ENCODE measurements at regions of chr10 and their contacts with region 1.

Region 1: DNA sequence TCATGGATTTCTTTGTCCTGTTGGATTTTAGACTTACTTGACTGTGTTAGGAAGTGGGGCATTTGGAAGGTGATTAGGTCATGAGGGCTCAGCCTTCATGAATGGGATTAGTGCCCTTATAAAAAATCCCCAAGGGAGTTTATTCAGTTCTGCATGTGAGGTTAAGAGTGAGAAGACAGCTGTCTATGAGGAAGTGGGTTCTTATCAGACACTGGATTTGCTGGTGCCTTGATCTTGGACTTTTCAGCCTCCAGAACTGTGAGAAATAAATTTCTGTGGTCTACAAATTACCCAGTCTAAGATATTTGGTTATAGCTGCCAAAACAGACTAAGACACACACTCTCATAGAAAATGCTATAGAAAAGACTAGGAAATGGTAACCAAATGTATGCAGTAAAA is 724.7 kb upstream of the FZD8 start:
- DNase-seq: no peak
- ATAC-seq: no peak
- H3K4me3 ChIP-seq: no peak overlapping the region
- H3K27ac ChIP-seq: no peak overlapping the region
- H3K4me1 ChIP-seq: 0 out of 2 replicates have a peak, but pooled peaks cover 3% of the 10 kb centered on the region
- H3K27me3 ChIP-seq: no peaks in the 10 kb centered on the region
- CTCF ChIP-seq: no peak

Region 2: DNA sequence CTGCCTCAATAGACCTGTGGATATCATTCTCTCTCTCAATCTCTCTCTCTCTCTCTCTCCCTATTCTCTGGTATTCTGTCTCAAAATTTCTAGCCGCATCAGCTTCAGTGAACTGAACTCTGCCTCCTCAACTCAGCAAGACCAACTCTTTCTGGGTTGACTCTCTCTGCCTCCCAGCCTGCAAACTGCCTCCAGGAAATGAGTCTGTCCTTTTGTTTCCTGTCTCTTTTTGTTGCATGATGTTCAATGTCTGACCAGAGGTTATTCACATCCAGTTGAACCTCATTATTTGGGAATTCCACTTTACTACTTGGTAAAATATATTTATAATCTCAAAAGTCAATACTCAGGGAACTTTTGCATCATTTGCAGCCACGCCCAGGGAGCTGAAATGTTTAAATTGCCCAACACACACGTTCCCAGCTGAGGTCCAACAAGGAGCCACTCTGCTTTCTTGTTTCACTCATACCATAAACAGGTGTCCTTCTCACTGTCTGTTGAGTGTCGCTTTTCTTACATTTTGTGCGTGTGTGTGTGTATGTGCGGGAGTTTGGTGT is 41.9 kb before region 1 on chr10:
- CTCF ChIA-PET with region 1: no interaction called
- POLR2A ChIA-PET with region 1: no interaction called
- intact Hi-C with region 1: no loop called
- DNase-seq: peak; percentile 89
- ATAC-seq: peak; percentile 88
- H3K4me3 ChIP-seq: no peak overlapping the region
- H3K27ac ChIP-seq: peak overlapping the region; percentile 57
- H3K4me1 ChIP-seq: peaks cover 18% of the 10 kb centered on the region
- H3K27me3 ChIP-seq: no peaks in the 10 kb centered on the region
- CTCF ChIP-seq: no peak

Region 3: DNA sequence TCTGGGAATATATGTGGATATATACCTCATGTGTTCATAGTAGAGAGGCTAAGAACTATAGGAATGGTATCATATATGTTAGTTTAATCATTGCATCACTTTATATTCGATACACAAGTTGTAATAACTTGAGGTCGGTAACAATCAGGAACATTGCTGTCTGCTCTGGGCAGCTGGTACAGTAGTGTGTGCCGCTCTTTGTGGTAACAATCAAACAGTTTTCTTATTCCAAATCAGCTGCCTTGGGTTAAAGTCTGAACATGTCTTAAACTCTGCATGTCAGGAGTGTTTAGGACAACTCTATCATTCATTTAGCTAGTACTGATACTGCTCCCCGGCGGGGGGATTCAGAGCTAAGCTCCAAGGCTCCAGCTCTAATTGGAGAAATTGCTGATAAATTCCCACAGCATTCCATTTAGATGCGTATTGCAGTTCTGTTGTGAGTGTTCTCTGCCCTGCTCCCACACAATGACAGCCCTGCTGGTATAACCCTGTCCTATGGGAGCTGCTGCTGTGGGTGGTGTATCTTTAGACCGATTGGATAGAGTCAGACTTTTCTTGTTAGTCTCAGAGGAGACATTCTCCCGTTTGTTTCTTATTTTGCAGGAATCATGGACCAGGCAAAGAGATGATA is 17.3 kb before region 1 on chr10:
- CTCF ChIA-PET with region 1: interaction called, 12 read pairs
- POLR2A ChIA-PET with region 1: no interaction called
- intact Hi-C with region 1: no loop called
- DNase-seq: no peak
- ATAC-seq: 0 out of 2 replicates have a peak, but pooled peaks have one; percentile 26
- H3K4me3 ChIP-seq: no peak overlapping the region
- H3K27ac ChIP-seq: no peak overlapping the region
- H3K4me1 ChIP-seq: peaks cover 14% of the 10 kb centered on the region
- H3K27me3 ChIP-seq: no peaks in the 10 kb centered on the region
- CTCF ChIP-seq: no peak